Testis (tissue), 5 donors: ENCODE measurements at regions of chr11 and their contacts with region 1.

Region 1: DNA sequence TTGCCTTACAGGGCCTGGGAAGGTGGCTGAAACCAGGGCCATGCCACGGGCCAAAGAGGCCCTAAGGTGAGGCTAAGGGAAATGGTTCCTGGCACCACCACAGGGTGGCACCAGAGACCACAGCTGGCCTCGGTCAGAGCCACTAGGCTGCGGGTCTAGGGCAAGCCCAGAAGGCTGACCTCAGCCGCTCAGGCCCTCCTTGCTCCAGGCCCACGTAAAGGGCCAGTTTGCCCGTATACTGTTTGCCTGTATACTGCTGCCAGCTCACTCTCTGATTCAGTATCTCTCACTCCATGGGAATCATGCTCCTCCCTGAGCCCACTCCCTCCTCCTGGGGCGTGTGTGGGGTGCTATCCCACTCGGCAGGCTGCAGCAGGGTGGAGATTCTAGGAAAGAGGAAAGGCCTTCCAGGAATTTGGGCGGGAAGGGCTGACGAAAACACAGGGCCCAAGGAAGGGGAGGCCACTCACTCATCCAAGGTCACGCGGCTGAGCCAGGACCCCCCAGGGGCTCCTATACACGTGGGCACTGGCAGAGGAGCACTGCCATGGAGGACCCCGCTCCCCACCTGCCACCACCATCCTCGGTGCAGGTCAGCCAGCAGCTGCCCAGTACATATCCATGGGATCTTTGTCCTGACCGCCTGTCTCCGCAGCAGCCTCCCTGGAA is 62.4 kb downstream of the NECTIN1 start:
- DNase-seq: peak; percentile 84
- H3K4me3 ChIP-seq: no peak overlapping the region
- H3K27ac ChIP-seq: no peak overlapping the region
- H3K4me1 ChIP-seq: peaks cover 8% of the 10 kb centered on the region
- H3K27me3 ChIP-seq: no peaks in the 10 kb centered on the region
- CTCF ChIP-seq: peak; percentile 84 to 88 (median 87)
- POLR2A ChIP-seq: no peak

Region 2: DNA sequence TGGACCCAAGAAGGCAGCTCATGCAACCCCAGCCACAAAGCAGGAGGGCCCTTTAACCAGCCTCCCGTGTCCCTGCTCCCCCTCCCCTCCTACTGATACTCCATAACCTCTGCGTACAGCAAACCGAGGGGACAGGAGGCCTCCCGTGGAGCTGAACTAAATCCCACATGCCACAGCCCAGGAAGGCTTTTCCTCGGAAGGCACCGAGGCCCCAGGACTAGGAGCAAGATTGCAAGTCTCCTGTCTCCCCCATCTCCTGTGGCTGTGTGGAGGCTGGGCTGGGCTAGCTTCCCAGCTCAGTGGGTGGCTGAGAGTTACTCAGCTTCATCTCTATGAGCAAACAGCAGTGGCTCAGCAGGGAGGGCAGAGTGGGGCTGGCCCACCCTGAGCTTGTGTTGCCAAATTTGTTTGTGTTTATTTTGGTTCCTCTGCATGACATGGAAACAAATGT is 125.1 kb after region 1 on chr11:
- intact Hi-C with region 1: no loop called
- DNase-seq: peak; percentile 43
- H3K4me3 ChIP-seq: no peak overlapping the region
- H3K27ac ChIP-seq: no peak overlapping the region
- H3K4me1 ChIP-seq: no peaks in the 10 kb centered on the region
- H3K27me3 ChIP-seq: no peaks in the 10 kb centered on the region
- CTCF ChIP-seq: no peak
- POLR2A ChIP-seq: no peak

Region 3: DNA sequence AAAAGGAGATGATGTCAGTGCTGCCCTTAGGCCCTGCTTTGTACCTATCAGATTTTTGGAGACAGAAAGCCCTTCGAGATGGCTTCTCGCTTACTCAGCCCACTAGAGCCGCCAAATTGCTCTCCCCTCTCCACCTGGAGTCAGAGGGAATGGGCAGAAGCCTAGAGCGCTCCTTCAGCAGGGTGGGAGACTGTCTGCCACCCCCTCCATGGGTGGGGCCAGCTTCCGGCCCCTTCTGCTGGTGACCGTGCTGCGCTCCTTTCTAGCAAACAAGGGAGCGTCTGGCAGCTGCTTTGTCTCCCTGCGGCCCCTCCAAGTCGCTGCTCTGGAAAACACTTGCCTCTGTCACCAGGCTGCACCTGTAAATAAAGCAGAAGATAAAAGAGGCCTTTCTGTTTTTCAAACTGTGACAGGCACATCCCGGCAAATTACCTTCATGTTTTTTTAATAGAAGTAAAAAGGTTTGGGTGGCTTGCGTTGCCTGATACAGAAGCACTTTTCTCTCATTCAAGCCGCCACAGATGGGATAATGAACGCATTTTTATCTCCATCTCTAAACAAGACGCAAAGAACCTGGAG is 208.2 kb after region 1 on chr11:
- intact Hi-C with region 1: no loop called
- DNase-seq: no peak
- H3K4me3 ChIP-seq: no peak overlapping the region
- H3K27ac ChIP-seq: no peak overlapping the region
- H3K4me1 ChIP-seq: no peaks in the 10 kb centered on the region
- H3K27me3 ChIP-seq: no peaks in the 10 kb centered on the region
- CTCF ChIP-seq: no peak
- POLR2A ChIP-seq: no peak

Region 4: DNA sequence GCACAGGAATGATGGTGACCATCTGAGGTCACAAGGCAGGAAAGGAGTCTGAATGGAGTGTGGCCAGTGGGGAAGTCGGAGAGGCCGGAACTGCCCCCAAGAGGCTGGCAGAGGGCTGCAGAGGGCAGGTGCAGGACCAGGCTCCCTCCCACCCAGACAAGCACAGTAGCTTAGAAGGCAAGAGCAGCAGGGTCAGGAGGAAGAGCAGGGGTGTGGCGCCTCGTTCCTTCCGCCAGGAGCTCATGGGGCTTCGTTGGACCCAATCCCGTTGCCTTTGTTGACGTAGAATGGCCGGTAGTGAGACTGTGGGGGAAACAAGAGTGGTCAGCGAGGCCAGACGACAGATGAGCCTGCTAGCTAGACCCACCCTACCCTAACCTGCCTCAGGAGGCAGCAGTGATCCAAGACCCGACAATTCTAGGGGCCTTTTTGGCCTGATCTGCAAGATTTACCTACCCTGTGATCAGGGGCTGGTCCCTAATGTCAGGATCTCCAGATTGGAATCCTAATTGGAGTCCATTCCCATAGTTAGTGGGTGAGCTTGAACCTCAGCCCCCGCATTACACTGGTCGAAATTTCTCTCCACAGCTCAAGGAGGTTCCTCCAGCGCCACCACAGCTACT is 445.7 kb after region 1 on chr11:
- intact Hi-C with region 1: loop called (anchors 10 kb)
- DNase-seq: no peak
- H3K4me3 ChIP-seq: no peak overlapping the region
- H3K27ac ChIP-seq: no peak overlapping the region
- H3K4me1 ChIP-seq: no peaks in the 10 kb centered on the region
- H3K27me3 ChIP-seq: no peaks in the 10 kb centered on the region
- CTCF ChIP-seq: no peak
- POLR2A ChIP-seq: no peak